ENCODE measurements at regions of chr1 and their contacts with region 1.

Region 1: DNA sequence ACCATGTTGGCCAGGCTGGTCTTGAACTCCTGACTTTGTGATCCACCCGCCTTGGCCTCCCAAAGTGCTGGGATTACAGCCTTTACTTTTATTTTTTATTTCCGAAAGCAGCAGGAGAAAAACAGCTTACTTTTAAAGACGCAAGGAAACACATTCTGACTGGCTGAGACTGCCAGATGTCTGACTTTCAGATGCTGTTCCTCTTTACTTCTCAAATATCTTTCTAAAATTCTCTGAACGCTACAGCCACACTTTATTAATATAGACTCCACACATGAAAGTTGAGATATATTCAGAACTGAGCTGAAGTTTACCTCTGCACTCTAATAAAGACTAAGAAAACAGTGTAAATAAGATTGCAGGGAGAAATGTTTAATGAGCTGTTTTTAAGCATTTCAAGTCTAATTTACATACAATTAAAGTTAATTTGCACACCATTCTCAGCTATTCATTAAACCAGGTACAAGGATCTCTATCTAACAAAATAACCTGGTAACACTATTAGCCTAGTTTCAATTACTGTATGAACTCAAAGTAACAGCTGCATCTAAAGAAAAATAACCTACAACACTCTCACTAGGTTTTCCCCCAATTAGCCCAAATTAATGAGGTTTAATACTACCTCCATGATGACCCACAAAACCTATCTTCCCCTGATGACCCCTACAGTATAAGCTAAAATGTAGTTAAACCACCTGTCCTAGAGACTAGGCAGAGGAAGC is 24.9 kb downstream of the WASF2 start:
- DNase-seq: no peak
- ATAC-seq: no peak
- H3K4me3 Mint-ChIP-seq: no peak overlapping the region
- H3K27ac Mint-ChIP-seq: no peak overlapping the region
- H3K4me1 Mint-ChIP-seq: peaks cover 51% of the 10 kb centered on the region
- H3K27me3 Mint-ChIP-seq: no peaks in the 10 kb centered on the region

Region 2: DNA sequence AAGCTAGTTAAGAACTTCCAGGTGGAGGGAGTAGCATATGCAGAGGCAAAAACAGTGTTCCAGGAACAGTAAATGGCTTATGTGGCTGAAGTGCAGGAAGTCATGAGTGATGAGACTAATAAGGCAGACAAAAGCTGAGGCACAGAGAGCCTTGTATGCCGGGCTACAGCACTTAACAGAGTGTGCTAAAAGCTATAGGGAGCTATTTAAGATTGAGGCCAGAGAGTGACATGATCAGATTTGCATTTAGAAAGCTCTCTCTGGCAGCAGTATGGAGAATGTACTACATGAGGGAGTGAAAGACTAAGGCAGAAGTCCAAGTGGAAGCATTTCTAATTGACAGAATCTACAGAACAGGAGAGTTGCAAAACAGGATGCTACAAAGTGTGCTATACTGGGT is 13.7 kb before region 1 on chr1:
- CTCF ChIA-PET with region 1: interaction called, 6 read pairs
- POLR2A ChIA-PET with region 1: no interaction called
- intact Hi-C with region 1: loop called in 1 of 2 experiments (anchors 2 kb)
- DNase-seq: no peak
- ATAC-seq: no peak
- H3K4me3 Mint-ChIP-seq: no peak overlapping the region
- H3K27ac Mint-ChIP-seq: no peak overlapping the region
- H3K4me1 Mint-ChIP-seq: peaks cover 64% of the 10 kb centered on the region
- H3K27me3 Mint-ChIP-seq: no peaks in the 10 kb centered on the region

Measured in activated CD4-positive, alpha-beta T cell treated with anti-CD3 and anti-CD28 coated beads for 36 hours (primary cell).